MCF 10A (cell line): ENCODE measurements at regions of chr1 and their contacts with region 1.

Region 1: DNA sequence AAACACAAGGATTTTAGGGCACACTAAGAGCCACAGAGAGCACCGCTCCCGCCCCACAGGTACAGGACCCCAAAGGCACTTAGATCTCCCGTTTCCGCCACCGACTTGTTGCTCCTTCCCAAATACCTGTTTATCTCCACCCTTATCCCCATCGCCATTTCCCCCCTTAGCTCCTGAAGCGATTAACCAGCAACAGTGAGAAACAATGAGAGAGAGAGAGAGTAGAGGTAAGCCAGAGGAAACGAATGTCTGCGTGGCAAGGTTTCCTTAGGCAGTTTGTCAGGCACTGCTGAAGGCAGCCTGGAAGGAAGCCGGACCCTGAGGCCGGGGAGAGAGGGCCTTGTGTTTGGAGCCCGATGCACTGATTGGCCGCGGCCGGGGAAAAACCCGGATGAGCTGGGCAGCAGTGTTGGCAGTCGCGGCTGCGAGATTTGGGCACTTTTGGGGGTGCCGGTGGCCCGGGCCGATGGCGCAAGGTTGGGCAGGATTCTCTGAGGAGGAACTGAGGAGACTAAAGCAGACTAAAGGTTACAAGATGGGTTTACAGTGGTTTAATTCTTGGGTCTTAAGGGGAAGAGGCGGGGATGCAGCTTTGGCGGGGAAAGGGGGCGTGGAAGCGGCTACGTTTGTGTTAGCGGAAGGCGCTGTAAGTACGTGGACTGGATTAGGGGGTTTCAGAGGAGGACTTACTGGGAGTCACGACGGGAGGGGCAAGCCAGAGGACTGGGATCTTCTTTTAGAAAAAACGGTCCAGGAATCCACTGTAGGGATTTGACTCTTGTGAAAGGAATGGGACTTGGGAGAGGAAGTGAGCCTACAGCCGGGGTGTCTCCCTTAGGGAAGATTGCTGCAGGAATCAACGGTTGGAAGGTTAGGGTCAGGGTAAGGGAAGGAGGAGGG is at the start of gene GORAB:
- DNase-seq: peak; percentile 97
- H3K4me3 Mint-ChIP-seq: no peak within 1 kb of the TSS
- H3K27ac Mint-ChIP-seq: no peak within 1 kb of the TSS
- H3K4me1 Mint-ChIP-seq: peaks cover 9% of the 10 kb centered on the region
- H3K27me3 Mint-ChIP-seq: no peaks in the 10 kb centered on the region
- CTCF ChIP-seq: no peak
- total RNA-seq, gene GORAB: 14.0 and 15.1 TPM in 2 replicates

Region 2: GRCh38 chr1:170562646-170563338 is 30.8 kb after region 1 on chr1:
- CTCF ChIA-PET with region 1: interaction called, 4 read pairs
- POLR2A ChIA-PET with region 1: interaction called, 20 read pairs
- intact Hi-C with region 1: loop called (anchors 2 kb)
- DNase-seq: peak; percentile 95
- H3K4me3 Mint-ChIP-seq: peak overlapping the region; percentile 27
- H3K27ac Mint-ChIP-seq: peak overlapping the region; percentile 83
- H3K4me1 Mint-ChIP-seq: peaks cover 33% of the 10 kb centered on the region
- H3K27me3 Mint-ChIP-seq: no peaks in the 10 kb centered on the region
- CTCF ChIP-seq: no peak

Region 3: GRCh38 chr1:170685166-170685565 is 153.2 kb after region 1 on chr1:
- CTCF ChIA-PET with region 1: interaction called, 12 read pairs
- POLR2A ChIA-PET with region 1: interaction called, 3 read pairs
- intact Hi-C with region 1: loop called (anchors 5 kb)
- DNase-seq: no peak
- H3K4me3 Mint-ChIP-seq: no peak overlapping the region
- H3K27ac Mint-ChIP-seq: no peak overlapping the region
- H3K4me1 Mint-ChIP-seq: peaks cover 11% of the 10 kb centered on the region
- H3K27me3 Mint-ChIP-seq: no peaks in the 10 kb centered on the region
- CTCF ChIP-seq: no peak

Region 4: GRCh38 chr1:170707959-170708655 is 176.1 kb after region 1 on chr1:
- CTCF ChIA-PET with region 1: no interaction called
- POLR2A ChIA-PET with region 1: no interaction called
- intact Hi-C with region 1: loop called (anchors 5 kb)
- DNase-seq: peak; percentile 93
- H3K4me3 Mint-ChIP-seq: no peak overlapping the region
- H3K27ac Mint-ChIP-seq: peak overlapping the region; percentile 67
- H3K4me1 Mint-ChIP-seq: peaks cover 25% of the 10 kb centered on the region
- H3K27me3 Mint-ChIP-seq: no peaks in the 10 kb centered on the region
- CTCF ChIP-seq: no peak

Region 5: DNA sequence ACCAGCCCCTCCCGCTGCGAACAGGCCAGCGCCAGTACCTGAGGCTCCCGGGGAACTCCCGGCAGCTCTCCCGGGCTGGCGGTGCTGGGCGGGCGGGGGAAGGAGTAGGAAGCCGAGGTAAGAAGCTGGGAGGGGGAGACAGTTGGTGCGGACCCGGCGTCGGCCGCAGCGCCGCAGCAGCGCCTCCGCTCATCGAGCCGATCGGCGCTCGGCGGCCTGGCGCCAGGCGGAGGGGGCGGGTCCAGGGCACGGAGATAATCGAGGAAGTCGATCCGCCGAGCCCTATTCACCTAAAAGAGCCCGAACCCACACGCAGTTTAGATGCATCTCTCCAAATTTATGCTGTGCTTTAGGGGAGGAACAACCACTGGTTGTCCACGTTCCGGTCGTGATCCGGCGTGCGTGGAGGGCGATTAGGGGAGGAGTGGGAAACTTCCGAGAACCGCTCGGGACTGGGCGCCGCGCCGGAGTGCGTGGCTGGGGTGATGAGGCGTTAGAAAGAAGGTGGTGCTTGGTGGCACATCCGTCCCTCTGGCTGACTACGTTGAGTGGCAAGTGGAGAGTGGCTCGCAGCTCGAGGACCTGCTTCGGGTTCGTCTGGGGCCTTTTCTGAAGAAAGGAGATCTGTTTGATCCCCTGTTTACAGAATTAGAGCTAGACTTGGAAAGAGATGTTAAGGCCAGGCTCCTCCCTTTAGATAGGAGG is 1210.0 kb after region 1 on chr1 and contains the start of gene VAMP4:
- CTCF ChIA-PET with region 1: no interaction called
- POLR2A ChIA-PET with region 1: no interaction called
- intact Hi-C with region 1: no loop called
- DNase-seq: peak; percentile 89
- H3K4me3 Mint-ChIP-seq: peak within 1 kb of the TSS; percentile 87
- H3K27ac Mint-ChIP-seq: peak within 1 kb of the TSS; percentile 98
- H3K4me1 Mint-ChIP-seq: peaks cover 45% of the 10 kb centered on the region
- H3K27me3 Mint-ChIP-seq: no peaks in the 10 kb centered on the region
- CTCF ChIP-seq: no peak
- total RNA-seq, gene VAMP4: 20.2 and 21.1 TPM in 2 replicates